ENCODE measurements at regions of chr6 and their contacts with region 1.

Region 1: GRCh38 chr6:127120787-127121636 is 2.5 kb downstream of the RSPO3 start:
- DNase-seq: peak; percentile 52
- H3K4me3 ChIP-seq: no peak overlapping the region
- H3K27ac ChIP-seq: no peak overlapping the region
- H3K4me1 ChIP-seq: peaks cover 15% of the 10 kb centered on the region
- H3K27me3 ChIP-seq: peaks cover 38% of the 10 kb centered on the region
- CTCF ChIP-seq: peak; percentile 65 to 89

Region 2: DNA sequence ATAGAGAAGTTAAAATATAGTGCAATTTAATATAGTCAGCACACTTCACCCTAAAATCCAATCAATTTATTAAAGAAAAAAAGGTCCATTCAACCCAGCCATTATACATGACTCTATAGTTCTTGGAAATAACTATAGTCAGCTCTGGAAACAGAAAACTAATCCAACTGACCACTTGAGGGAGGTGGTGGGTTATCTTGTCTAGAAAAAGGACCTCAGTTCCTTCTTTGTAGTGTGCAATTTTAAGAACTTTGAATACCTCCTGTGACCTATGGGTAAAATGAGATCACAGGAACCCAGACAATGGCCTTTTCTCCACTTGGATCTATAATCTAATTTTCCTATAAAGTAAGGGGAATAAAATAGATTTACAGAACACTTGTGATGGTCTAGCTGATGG is 944.7 kb before region 1 on chr6:
- CTCF ChIA-PET with region 1: no interaction called
- dilution Hi-C with region 1: no loop called
- in situ Hi-C with region 1: loop called in 1 of 2 experiments (anchors 25 kb)
- intact Hi-C with region 1: loop called (anchors 1 kb)
- DNase-seq: peak; percentile 44
- H3K4me3 ChIP-seq: no peak overlapping the region
- H3K27ac ChIP-seq: no peak overlapping the region
- H3K4me1 ChIP-seq: peaks cover 8% of the 10 kb centered on the region
- H3K27me3 ChIP-seq: no peaks in the 10 kb centered on the region
- CTCF ChIP-seq: peak; percentile 41 to 55

Region 3: DNA sequence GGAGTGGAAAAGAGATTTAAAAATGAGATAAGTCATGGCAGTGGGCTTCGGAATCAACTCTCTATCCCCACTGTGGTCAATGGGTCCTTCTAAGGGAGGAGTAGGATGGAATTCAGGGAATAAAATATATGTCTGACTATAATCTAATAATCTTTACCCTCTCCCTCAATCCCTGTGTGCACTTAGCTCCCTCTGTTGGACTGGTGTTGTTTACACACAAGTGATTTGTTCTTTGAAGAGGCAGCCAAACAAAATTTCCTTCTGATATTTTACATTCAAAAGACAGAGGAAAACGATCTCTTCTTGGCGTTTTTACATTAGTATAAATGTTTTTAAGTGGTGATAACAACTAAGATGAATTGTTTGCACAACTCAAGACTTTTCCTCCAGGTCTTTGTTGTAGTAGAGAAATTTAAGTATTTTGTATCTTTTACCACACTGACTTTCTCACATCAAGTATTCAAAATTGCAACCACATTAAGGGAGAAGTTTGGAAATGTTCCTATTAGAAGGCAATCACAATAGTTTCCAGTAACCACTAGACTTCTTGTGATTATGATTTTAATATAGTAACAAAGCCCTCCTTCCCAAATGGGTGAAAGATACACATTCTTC is 463.3 kb before region 1 on chr6:
- CTCF ChIA-PET with region 1: interaction called, 7 read pairs
- dilution Hi-C with region 1: no loop called
- in situ Hi-C with region 1: no loop called
- intact Hi-C with region 1: loop called (anchors 5 kb)
- DNase-seq: peak; percentile 32
- H3K4me3 ChIP-seq: no peak overlapping the region
- H3K27ac ChIP-seq: no peak overlapping the region
- H3K4me1 ChIP-seq: no peaks in the 10 kb centered on the region
- H3K27me3 ChIP-seq: no peaks in the 10 kb centered on the region
- CTCF ChIP-seq: peak; percentile 57 to 74

Region 4: GRCh38 chr6:126842769-126843168 is 278.2 kb before region 1 on chr6:
- CTCF ChIA-PET with region 1: no interaction called
- dilution Hi-C with region 1: no loop called
- in situ Hi-C with region 1: no loop called
- intact Hi-C with region 1: no loop called
- DNase-seq: no peak
- H3K4me3 ChIP-seq: no peak overlapping the region
- H3K27ac ChIP-seq: no peak overlapping the region
- H3K4me1 ChIP-seq: no peaks in the 10 kb centered on the region
- H3K27me3 ChIP-seq: no peaks in the 10 kb centered on the region
- CTCF ChIP-seq: no peak

Region 5: GRCh38 chr6:126926926-126927325 is 194.1 kb before region 1 on chr6:
- CTCF ChIA-PET with region 1: interaction called, 27 read pairs
- dilution Hi-C with region 1: no loop called
- in situ Hi-C with region 1: no loop called
- intact Hi-C with region 1: no loop called
- DNase-seq: no peak
- H3K4me3 ChIP-seq: no peak overlapping the region
- H3K27ac ChIP-seq: no peak overlapping the region
- H3K4me1 ChIP-seq: no peaks in the 10 kb centered on the region
- H3K27me3 ChIP-seq: peaks cover 8% of the 10 kb centered on the region
- CTCF ChIP-seq: no peak

Region 6: DNA sequence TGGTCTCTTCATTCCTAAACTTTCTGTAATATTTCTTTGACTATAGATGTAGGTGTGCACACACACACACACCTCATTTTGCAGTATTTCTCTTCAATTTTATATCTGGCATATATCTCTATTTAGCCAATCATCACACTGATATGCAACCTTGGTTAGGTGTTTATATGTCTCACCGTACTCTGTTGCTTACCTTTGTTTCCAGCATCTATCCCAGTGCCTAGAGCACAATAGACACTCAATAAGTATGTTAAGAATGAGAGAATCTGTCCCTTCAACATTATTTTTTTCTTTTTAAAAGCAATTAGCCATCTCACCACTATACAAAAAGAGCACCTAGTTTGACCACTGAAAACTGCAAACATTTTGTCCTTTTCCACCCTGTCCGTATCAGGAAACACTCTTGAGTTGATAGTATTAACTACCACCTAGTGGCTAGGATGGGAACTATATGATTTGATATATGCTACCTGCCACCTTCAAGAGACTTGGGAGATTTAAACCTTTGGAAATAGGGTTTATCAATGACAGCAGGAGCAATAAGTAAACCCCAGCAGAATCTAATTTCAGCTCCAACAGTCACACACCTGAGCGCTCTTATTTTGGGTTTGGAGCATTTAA is 51.2 kb before region 1 on chr6:
- CTCF ChIA-PET with region 1: no interaction called
- dilution Hi-C with region 1: no loop called
- in situ Hi-C with region 1: no loop called
- intact Hi-C with region 1: no loop called
- DNase-seq: peak; percentile 11
- H3K4me3 ChIP-seq: no peak overlapping the region
- H3K27ac ChIP-seq: no peak overlapping the region
- H3K4me1 ChIP-seq: no peaks in the 10 kb centered on the region
- H3K27me3 ChIP-seq: no peaks in the 10 kb centered on the region
- CTCF ChIP-seq: peak; percentile 40 to 61